Left ventricle myocardium superior (tissue), 1 donor: ENCODE measurements at regions of chr10 and their contacts with region 1.

Region 1: GRCh38 chr10:71285180-71285545 is 33.9 kb upstream of the SLC29A3 start:
- DNase-seq: peak; percentile 61
- ATAC-seq: peak; percentile 77

Region 2: DNA sequence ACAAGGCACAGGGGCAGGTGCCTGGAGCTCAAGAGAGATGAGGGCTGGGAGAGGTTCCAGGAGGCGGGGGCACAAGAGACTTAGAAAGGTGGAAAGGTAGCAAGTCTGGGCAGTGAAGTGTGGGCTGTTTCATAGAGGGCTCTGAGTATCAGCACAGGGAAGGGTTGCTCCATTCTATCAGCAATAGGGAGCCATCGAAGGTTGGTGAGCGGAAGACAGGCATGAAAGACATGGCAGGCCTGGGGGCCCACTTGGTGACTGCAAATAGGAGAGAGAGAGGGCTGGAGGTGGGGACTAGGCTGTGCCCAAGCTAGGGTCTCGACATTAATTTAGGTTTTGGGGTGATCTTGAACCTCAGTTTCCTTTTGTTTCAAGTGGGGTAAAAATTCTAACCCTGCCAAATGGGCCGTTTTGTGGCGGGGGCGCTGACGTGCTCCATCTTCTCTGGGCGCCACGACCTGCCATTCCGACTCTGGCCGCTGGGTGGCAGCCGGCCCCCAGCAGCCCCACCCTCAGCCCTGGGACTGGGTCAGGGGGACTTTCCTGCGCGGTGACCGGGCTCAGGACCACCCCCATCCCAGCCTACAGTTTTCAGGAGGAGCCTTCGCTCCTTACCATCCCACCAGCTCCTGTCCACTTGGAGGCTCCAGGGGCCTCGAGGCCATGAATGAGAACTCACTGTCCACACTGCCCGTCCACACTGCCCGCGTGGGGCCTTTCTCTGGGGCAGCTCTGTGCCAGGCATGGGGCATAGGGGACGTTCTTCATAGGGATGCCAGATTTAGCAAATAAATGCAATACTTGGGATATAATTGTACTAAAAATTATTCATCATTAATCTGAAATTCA is 359.6 kb before region 1 on chr10:
- intact Hi-C with region 1: loop called (anchors 10 kb)
- DNase-seq: peak; percentile 75
- ATAC-seq: peak; percentile 86

Region 3: GRCh38 chr10:71569775-71570588 is 284.8 kb after region 1 on chr10:
- intact Hi-C with region 1: no loop called
- DNase-seq: peak; percentile 74
- ATAC-seq: peak; percentile 72

Region 4: GRCh38 chr10:71727738-71728737 is 442.9 kb after region 1 on chr10:
- intact Hi-C with region 1: no loop called
- DNase-seq: peak; percentile 76
- ATAC-seq: peak; percentile 83